ENCODE measurements at regions of chr3 and their contacts with region 1.

Region 1: GRCh38 chr3:53493963-53494791 is at the start of gene CACNA1D:
- DNase-seq: no peak
- ATAC-seq: peak; percentile 56
- H3K4me3 ChIP-seq: peak within 1 kb of the TSS; percentile 40 to 71 (median 60)
- H3K27ac ChIP-seq: no peak within 1 kb of the TSS
- H3K4me1 ChIP-seq: peaks cover 43% of the 10 kb centered on the region
- H3K27me3 ChIP-seq: peaks cover 5 to 25% of the 10 kb centered on the region in 2 experiments; a peak in 3 of 5 replicates
- CTCF ChIP-seq: 0 out of 2 replicates have a peak, but pooled peaks have one; percentile 12
- EP300 ChIP-seq: no peak
- POLR2A ChIP-seq: no peak
- RAD21 ChIP-seq: no peak
- total RNA-seq, gene CACNA1D: 0.38 and 0.45 TPM in 2 replicates

Region 2: DNA sequence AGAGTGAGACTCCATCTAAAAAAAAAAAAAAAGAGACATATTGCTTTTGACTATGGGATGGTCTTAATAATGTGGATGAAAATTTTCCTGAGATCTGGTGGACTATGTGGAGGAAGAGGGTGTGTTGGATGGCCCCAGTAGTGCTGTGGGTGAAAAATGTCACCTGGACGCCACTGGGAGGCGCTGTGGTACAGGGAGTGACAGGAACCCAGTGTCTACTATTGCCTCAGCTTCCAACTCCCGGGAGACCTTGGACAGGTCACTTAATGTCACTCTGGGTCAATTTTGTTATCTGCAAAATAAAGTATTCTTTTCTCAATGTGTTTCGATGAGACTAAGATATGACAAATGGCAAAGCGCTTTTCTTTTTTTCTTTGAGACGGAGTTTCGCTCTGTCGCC is 119.2 kb before region 1 on chr3:
- CTCF ChIA-PET with region 1: interaction called, 34 read pairs
- POLR2A ChIA-PET with region 1: interaction called, 3 read pairs
- in situ Hi-C with region 1: loop called (anchors 10 kb)
- intact Hi-C with region 1: loop called (anchors 1 kb)
- DNase-seq: peak; percentile 69
- ATAC-seq: peak; percentile 99
- H3K4me3 ChIP-seq: no peak overlapping the region
- H3K27ac ChIP-seq: no peak overlapping the region
- H3K4me1 ChIP-seq: no peaks in the 10 kb centered on the region
- H3K27me3 ChIP-seq: no peaks in the 10 kb centered on the region
- CTCF ChIP-seq: peak; percentile 94
- EP300 ChIP-seq: no peak
- POLR2A ChIP-seq: no peak
- RAD21 ChIP-seq: peak; percentile 93

Region 3: DNA sequence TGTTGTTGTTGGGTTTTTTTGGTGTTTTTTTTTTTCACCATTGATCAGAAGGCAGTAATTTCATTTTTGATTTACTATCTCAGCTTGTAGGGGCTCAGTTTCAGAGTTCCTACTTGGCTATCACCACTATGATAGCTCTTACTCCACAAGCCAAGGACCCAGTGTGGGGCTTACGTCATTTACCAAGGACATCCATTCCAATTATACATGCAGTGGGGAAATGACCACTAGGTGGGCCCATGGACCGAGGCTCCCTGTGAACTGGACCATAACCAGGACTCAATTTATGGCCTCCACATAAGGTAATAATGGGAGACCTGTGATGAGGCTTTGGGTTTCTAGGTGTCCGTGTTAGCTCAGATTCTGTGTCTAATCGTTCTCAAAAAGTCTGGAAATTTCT is 67.3 kb before region 1 on chr3:
- CTCF ChIA-PET with region 1: interaction called, 16 read pairs
- POLR2A ChIA-PET with region 1: no interaction called
- in situ Hi-C with region 1: no loop called
- intact Hi-C with region 1: loop called (anchors 1 kb)
- DNase-seq: peak; percentile 47
- ATAC-seq: peak; percentile 88
- H3K4me3 ChIP-seq: no peak overlapping the region
- H3K27ac ChIP-seq: no peak overlapping the region
- H3K4me1 ChIP-seq: peaks cover 9% of the 10 kb centered on the region
- H3K27me3 ChIP-seq: no peaks in the 10 kb centered on the region
- CTCF ChIP-seq: peak; percentile 71
- EP300 ChIP-seq: no peak
- POLR2A ChIP-seq: no peak
- RAD21 ChIP-seq: peak; percentile 69

Region 4: DNA sequence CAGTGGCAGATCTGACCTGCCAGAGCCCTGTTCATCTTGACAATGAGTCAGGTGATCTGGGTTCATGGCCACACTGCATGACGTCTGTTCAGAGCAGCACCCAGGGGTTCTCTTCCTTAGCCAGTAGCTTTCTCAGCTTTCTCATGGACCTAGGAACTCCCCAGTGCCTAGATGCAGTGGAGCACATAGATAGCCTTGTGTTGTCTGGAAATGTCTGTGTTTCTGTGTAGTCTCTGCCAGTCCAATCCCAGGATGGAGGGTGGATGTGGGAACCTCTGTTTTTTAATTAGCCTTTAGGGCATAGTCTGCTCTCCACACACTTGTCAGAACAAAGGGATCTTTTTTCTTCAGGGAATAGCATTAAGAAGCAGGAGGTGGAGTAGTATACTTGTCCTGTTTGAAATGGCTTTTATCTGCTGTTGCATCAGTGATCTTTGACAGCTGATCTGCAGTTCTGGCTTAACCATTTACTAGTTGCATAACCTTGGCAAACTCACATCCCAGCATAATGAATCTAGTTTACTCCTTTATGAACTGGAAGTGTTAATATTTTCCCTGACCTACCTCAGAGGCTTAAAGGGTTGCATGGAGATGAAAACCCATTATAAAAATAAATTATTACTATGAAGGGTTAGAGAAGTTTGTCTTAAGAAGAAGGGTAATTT is 15.9 kb before region 1 on chr3:
- CTCF ChIA-PET with region 1: no interaction called
- POLR2A ChIA-PET with region 1: interaction called, 23 read pairs
- in situ Hi-C with region 1: no loop called
- intact Hi-C with region 1: loop called (anchors 2 kb)
- DNase-seq: peak; percentile 98
- ATAC-seq: peak; percentile 93
- H3K4me3 ChIP-seq: peak overlapping the region in 2 of 3 experiments; percentile 26 to 61; a peak in 3 of 6 replicates
- H3K27ac ChIP-seq: peak overlapping the region; percentile 95
- H3K4me1 ChIP-seq: peaks cover 48% of the 10 kb centered on the region
- H3K27me3 ChIP-seq: no peaks in the 10 kb centered on the region
- CTCF ChIP-seq: no peak
- EP300 ChIP-seq: peak in 1 of 2 experiments; percentile 97
- POLR2A ChIP-seq: peak in 1 of 2 experiments; percentile 41; a peak in 1 of 4 replicates
- RAD21 ChIP-seq: no peak

Region 5: DNA sequence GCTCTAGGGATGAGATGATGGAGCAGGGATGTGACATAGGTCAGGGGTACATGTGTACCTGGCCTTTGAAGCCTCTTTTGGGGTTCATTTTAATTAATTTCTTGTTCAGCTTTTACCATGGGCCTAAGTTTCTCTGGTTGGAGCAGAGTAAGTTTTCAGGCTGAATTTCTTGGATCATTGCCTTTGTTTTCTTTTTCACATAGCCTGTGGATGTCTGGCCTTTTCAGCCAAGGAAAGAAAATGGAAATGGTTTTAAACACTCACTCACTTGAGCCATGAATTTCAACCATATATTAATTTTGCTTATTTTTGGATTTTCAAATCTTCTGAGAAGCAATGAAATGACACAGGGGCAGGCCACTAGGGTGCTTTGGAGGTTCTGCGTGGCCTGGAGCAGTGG is 30.4 kb after region 1 on chr3:
- CTCF ChIA-PET with region 1: no interaction called
- POLR2A ChIA-PET with region 1: no interaction called
- in situ Hi-C with region 1: no loop called
- intact Hi-C with region 1: no loop called
- DNase-seq: no peak
- ATAC-seq: no peak
- H3K4me3 ChIP-seq: no peak overlapping the region
- H3K27ac ChIP-seq: no peak overlapping the region
- H3K4me1 ChIP-seq: no peaks in the 10 kb centered on the region
- H3K27me3 ChIP-seq: no peaks in the 10 kb centered on the region
- CTCF ChIP-seq: no peak
- EP300 ChIP-seq: no peak
- POLR2A ChIP-seq: no peak
- RAD21 ChIP-seq: no peak

Region 6: GRCh38 chr3:53534676-53535400 is 40.7 kb after region 1 on chr3:
- CTCF ChIA-PET with region 1: no interaction called
- POLR2A ChIA-PET with region 1: no interaction called
- in situ Hi-C with region 1: no loop called
- intact Hi-C with region 1: no loop called
- DNase-seq: no peak
- ATAC-seq: no peak
- H3K4me3 ChIP-seq: no peak overlapping the region
- H3K27ac ChIP-seq: no peak overlapping the region
- H3K4me1 ChIP-seq: no peaks in the 10 kb centered on the region
- H3K27me3 ChIP-seq: no peaks in the 10 kb centered on the region
- CTCF ChIP-seq: no peak
- EP300 ChIP-seq: no peak
- POLR2A ChIP-seq: no peak
- RAD21 ChIP-seq: no peak

Region 7: DNA sequence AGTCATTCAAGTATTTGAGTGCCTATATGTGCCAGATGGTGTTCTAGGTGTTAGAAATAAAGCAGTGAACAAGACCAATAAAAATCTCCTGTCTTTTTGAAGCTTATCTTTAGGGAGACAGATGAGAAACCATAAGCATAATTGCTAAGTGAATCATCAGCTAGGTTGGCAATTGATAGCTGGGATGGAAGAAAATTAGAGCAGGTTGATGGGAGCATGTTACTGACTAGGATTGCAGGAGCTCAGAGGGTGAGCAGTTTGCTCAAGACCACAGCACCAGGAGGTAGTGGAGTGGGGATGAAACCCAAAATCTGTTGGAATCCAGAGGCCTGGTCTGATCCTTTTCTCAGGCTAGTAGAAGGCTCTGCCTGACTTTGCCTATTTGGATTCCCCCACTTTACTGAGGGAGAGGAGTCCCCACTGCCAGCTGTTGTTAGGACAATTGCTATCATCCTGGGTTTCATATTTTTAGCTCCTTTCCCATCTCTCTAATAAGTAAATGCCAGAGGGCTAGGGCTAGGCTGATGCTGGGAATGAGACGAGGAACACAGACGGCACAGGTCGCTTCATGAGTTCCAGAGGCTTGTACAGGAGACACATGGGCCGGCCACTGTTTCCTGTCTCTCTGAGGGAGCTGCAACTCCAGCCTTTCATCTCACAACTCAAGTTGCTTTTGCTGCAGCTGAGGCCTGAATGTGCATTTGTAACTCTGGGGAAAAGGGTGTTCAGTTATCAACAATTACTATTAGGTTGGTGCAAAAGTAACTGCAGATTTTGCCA is 103.1 kb after region 1 on chr3:
- CTCF ChIA-PET with region 1: no interaction called
- POLR2A ChIA-PET with region 1: no interaction called
- in situ Hi-C with region 1: no loop called
- intact Hi-C with region 1: no loop called
- DNase-seq: no peak
- ATAC-seq: no peak
- H3K4me3 ChIP-seq: no peak overlapping the region
- H3K27ac ChIP-seq: no peak overlapping the region
- H3K4me1 ChIP-seq: no peaks in the 10 kb centered on the region
- H3K27me3 ChIP-seq: no peaks in the 10 kb centered on the region
- CTCF ChIP-seq: no peak
- EP300 ChIP-seq: no peak
- POLR2A ChIP-seq: no peak
- RAD21 ChIP-seq: no peak

Region 8: DNA sequence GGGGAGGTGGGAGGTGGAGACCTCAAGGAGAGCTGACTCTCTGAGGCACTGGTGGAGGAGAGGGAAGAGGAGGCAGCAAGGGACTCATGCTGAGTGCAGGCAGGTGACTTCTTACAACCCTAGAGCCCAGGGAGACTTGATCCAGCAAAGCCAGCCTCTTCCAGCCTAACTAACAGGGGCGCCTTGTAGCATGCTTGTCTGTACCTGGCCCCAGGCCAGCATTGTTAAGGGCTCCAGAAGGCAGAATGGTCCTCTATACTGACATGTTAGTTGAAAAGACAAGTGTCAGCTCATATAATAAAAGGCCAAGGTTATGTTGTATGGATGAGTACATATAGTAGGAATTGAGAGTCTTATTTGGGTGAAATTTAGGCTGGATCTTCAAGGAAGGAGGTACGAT is 286.6 kb after region 1 on chr3:
- CTCF ChIA-PET with region 1: no interaction called
- POLR2A ChIA-PET with region 1: no interaction called
- in situ Hi-C with region 1: no loop called
- intact Hi-C with region 1: no loop called
- DNase-seq: no peak
- ATAC-seq: no peak
- H3K4me3 ChIP-seq: no peak overlapping the region
- H3K27ac ChIP-seq: no peak overlapping the region
- H3K4me1 ChIP-seq: no peaks in the 10 kb centered on the region
- H3K27me3 ChIP-seq: peaks cover 0 to 1% of the 10 kb centered on the region in 2 experiments; a peak in 1 of 5 replicates
- CTCF ChIP-seq: no peak
- EP300 ChIP-seq: no peak
- POLR2A ChIP-seq: no peak
- RAD21 ChIP-seq: no peak

Measured in HepG2 (cell line).